ENCODE measurements at regions of chr19 and their contacts with region 1.

Region 1: GRCh38 chr19:12847159-12848139 is 9.1 kb downstream of the MAST1 start:
- DNase-seq: peak; percentile 79 to 91 (median 83)
- ATAC-seq: peak; percentile 90 to 99 (median 96)
- H3K4me3 ChIP-seq: peak overlapping the region in 9 of 12 donors; percentile 7 to 39 (median 22)
- H3K27ac ChIP-seq: no peak overlapping the region
- H3K4me1 ChIP-seq: peaks cover 0 to 10% (median 6%) of the 10 kb centered on the region in 12 donors
- H3K27me3 ChIP-seq: peaks cover 0 to 34% (median 19%) of the 10 kb centered on the region in 9 donors
- CTCF ChIP-seq: peak; percentile 98 to 100 (median 99)
- POLR2A ChIP-seq: peak in 1 of 2 donors; percentile 7

Region 2: DNA sequence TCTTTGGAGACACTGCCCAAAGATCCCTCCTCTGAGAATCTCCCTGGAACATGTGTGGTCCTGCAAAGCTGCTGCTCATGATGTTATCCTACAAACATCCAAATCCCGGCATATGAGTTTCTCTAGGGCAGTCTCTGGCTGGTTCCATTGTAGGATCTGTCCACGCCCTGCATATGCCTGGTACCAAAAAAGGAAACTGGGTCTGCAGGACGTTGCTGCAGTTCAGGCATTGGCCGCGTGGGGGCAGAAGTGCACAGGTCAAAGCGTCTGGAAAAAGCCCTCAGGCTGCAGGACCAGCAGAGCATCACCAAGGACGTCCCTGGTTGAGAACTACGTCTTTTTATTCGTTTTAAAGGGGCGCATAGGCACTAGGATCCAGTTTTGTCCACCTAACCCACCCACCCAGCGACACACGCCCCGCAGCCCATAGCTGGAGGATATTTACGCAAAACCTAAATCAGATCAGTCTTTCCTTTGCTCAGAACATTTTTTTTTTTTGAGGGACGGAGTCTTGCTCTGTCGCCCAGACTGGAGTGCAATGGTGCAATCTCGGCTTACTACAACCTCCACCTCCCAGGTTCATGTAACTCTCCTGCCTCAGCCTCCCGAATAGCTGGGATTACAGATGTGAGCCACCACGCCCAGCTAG is 283.3 kb before region 1 on chr19:
- intact Hi-C with region 1: loop called in 1 of 10 experiments (anchors 10 kb)
- DNase-seq: peak; percentile 82 to 92 (median 88)
- ATAC-seq: peak; percentile 68 to 95 (median 93)
- H3K4me3 ChIP-seq: no peak overlapping the region
- H3K27ac ChIP-seq: peak overlapping the region in 1 of 12 donors; percentile 38
- H3K4me1 ChIP-seq: peaks cover 0 to 7% (median 0%) of the 10 kb centered on the region in 12 donors
- H3K27me3 ChIP-seq: no peaks in the 10 kb centered on the region
- CTCF ChIP-seq: peak; percentile 90 to 98 (median 96)
- POLR2A ChIP-seq: no peak

Region 3: GRCh38 chr19:12666265-12667048 is 181.0 kb before region 1 on chr19 and contains the starts of genes MAN2B1 and WDR83:
- intact Hi-C with region 1: loop called in 1 of 10 experiments (anchors 10 kb)
- DNase-seq: peak; percentile 77 to 88 (median 82)
- ATAC-seq: peak; percentile 60 to 89 (median 88)
- H3K4me3 ChIP-seq: peak within 1 kb of the TSS; percentile 55 to 97 (median 88)
- H3K27ac ChIP-seq: peak within 1 kb of the TSS in 11 of 12 donors; percentile 45 to 90 (median 77)
- H3K4me1 ChIP-seq: peaks cover 9 to 51% (median 38%) of the 10 kb centered on the region in 12 donors
- H3K27me3 ChIP-seq: no peaks in the 10 kb centered on the region
- CTCF ChIP-seq: no peak
- POLR2A ChIP-seq: peak in 1 of 2 donors; percentile 45
- total RNA-seq, gene MAN2B1: 16.0 to 135 (median 30.7) TPM
- total RNA-seq, gene WDR83: 6.0 to 9.2 (median 7.8) TPM

Region 4: GRCh38 chr19:12681074-12681951 is 166.1 kb before region 1 on chr19 and contains the start of gene DHPS:
- intact Hi-C with region 1: loop called in 4 of 10 experiments (anchors 5 to 10 kb)
- DNase-seq: peak; percentile 90 to 96 (median 95)
- ATAC-seq: peak; percentile 89 to 95 (median 90)
- H3K4me3 ChIP-seq: peak within 1 kb of the TSS; percentile 55 to 99 (median 90)
- H3K27ac ChIP-seq: peak within 1 kb of the TSS; percentile 80 to 100 (median 95)
- H3K4me1 ChIP-seq: peaks cover 0 to 21% (median 8%) of the 10 kb centered on the region in 12 donors
- H3K27me3 ChIP-seq: no peaks in the 10 kb centered on the region
- CTCF ChIP-seq: peak in 1 of 12 donors; percentile 20
- POLR2A ChIP-seq: peak in 1 of 2 donors; percentile 27
- total RNA-seq, gene DHPS: 47.6 to 121 (median 54.6) TPM

Region 5: DNA sequence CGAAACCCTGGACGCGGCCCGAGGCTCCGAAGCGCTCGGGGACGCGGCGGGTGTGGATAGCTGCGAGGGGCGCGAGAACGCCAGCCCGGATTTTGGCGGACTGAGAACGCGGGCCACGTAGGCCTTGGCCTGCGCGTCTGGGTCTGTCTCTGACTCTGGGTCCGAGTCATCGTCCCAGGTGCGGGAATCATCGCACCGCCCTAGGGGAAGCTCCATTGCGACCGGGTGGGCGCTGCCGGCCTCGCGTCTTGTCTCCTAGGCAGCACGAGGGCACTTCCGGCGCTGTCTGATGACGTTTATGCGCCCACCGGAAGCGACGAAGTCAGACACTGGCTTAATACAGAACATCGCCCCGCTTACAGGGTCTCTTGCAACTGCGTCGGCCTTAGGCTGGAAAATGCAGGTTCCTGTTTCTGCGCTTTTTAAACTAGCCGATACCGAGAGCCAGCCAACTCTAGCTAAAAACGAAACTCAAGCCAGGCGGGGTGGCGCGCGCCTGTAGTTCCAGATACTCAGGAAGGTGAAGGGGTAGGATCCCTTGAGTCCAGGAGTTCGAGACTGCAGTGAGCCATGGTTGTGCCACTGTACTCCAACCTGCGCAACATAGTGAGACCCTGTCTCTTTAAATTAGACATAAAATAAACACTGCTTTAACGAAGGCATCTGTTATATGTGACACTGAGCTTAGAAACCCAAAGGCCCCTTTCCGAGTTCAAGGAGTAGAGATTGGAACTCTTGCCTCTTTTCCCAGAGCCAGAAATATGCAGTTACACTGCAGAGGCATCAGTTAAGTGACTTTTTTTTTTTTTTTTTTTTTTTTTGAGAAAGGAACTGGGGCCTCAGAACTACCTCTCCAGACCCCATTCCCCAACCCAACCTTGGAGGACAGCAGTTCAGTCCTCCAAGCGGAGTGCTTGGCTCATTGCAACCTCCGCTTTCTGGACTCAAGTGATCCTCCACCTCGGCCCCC is 150.8 kb before region 1 on chr19 and contains the start of gene FBXW9:
- intact Hi-C with region 1: no loop called
- DNase-seq: peak; percentile 95 to 97 (median 96)
- ATAC-seq: peak; percentile 91 to 95 (median 93)
- H3K4me3 ChIP-seq: peak within 1 kb of the TSS; percentile 57 to 98 (median 88)
- H3K27ac ChIP-seq: peak within 1 kb of the TSS; percentile 41 to 91 (median 84)
- H3K4me1 ChIP-seq: peaks cover 0 to 22% (median 13%) of the 10 kb centered on the region in 12 donors
- H3K27me3 ChIP-seq: no peaks in the 10 kb centered on the region
- CTCF ChIP-seq: no peak
- POLR2A ChIP-seq: peak in 1 of 2 donors; percentile 66
- total RNA-seq, gene FBXW9: 1.5 to 3.6 (median 2.4) TPM

Region 6: GRCh38 chr19:12716861-12717260 is 130.6 kb before region 1 on chr19:
- intact Hi-C with region 1: loop called in 2 of 10 experiments (anchors 5 kb)
- DNase-seq: no peak
- ATAC-seq: no peak
- H3K4me3 ChIP-seq: no peak overlapping the region
- H3K27ac ChIP-seq: no peak overlapping the region
- H3K4me1 ChIP-seq: peaks cover 4 to 27% (median 16%) of the 10 kb centered on the region in 12 donors
- H3K27me3 ChIP-seq: no peaks in the 10 kb centered on the region
- CTCF ChIP-seq: peak in 7 of 12 donors; percentile 8 to 33 (median 25)
- POLR2A ChIP-seq: no peak

Region 7: GRCh38 chr19:12757544-12758274 is 89.7 kb before region 1 on chr19:
- intact Hi-C with region 1: loop called in 5 of 10 experiments (anchors 1 to 5 kb)
- DNase-seq: peak; percentile 66 to 85 (median 76)
- ATAC-seq: peak; percentile 33 to 83 (median 76)
- H3K4me3 ChIP-seq: peak overlapping the region in 9 of 12 donors; percentile 16 to 53 (median 40)
- H3K27ac ChIP-seq: peak overlapping the region in 9 of 12 donors; percentile 3 to 72 (median 48)
- H3K4me1 ChIP-seq: peaks cover 0 to 24% (median 15%) of the 10 kb centered on the region in 12 donors
- H3K27me3 ChIP-seq: peaks cover 0 to 4% (median 0%) of the 10 kb centered on the region in 9 donors
- CTCF ChIP-seq: peak; percentile 78 to 98 (median 92)
- POLR2A ChIP-seq: no peak

Region 8: DNA sequence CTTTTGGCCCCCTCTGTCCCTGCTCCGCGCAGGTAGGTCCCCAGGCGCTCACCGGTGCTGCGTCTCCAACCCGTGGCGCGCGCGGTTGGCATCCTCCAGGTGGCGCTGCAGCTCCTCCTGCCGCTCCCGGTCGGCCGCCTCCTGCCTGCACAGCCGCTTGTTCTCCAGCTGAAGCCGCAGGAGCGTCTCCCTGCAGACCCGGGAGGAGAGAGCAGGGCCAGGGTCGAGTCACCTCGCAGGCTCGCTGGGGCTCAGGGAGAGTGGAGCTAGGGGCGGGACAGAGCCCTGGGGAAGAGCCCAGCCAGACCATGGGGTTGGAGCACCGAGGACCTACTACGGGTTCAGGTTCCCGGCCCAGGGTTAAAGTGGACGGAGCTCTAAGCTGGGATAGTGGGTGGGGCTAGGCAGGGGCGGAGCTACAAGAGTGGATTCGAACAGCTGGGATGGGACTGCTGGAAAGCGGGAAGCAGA is 81.4 kb before region 1 on chr19:
- intact Hi-C with region 1: loop called in 7 of 10 experiments (anchors 1 to 5 kb)
- DNase-seq: peak; percentile 77 to 93 (median 88)
- ATAC-seq: peak in 3 of 4 donors; percentile 66 to 85 (median 76)
- H3K4me3 ChIP-seq: peak overlapping the region in 9 of 12 donors; percentile 14 to 61 (median 48)
- H3K27ac ChIP-seq: peak overlapping the region in 11 of 12 donors; percentile 15 to 82 (median 61)
- H3K4me1 ChIP-seq: peaks cover 0 to 39% (median 9%) of the 10 kb centered on the region in 12 donors
- H3K27me3 ChIP-seq: no peaks in the 10 kb centered on the region
- CTCF ChIP-seq: peak in 10 of 12 donors; percentile 66 to 99 (median 84)
- POLR2A ChIP-seq: peak in 1 of 2 donors; percentile 35

Region 9: GRCh38 chr19:12782229-12783028 is 65.0 kb before region 1 on chr19:
- intact Hi-C with region 1: no loop called
- DNase-seq: peak; percentile 94 to 97 (median 95)
- ATAC-seq: peak; percentile 6 to 75 (median 56)
- H3K4me3 ChIP-seq: peak overlapping the region; percentile 5 to 67 (median 54)
- H3K27ac ChIP-seq: peak overlapping the region; percentile 92 to 100 (median 99)
- H3K4me1 ChIP-seq: peaks cover 7 to 84% (median 61%) of the 10 kb centered on the region in 12 donors
- H3K27me3 ChIP-seq: no peaks in the 10 kb centered on the region
- CTCF ChIP-seq: peak in 4 of 12 donors; percentile 14 to 35 (median 18)
- POLR2A ChIP-seq: peak in 1 of 2 donors; percentile 75

Region 10: GRCh38 chr19:12907166-12907565 is 59.7 kb after region 1 on chr19:
- intact Hi-C with region 1: no loop called
- DNase-seq: no peak
- ATAC-seq: peak in 1 of 4 donors; percentile 48
- H3K4me3 ChIP-seq: no peak overlapping the region
- H3K27ac ChIP-seq: no peak overlapping the region
- H3K4me1 ChIP-seq: peaks cover 0 to 1% (median under 1%) of the 10 kb centered on the region in 12 donors
- H3K27me3 ChIP-seq: no peaks in the 10 kb centered on the region
- CTCF ChIP-seq: no peak
- POLR2A ChIP-seq: no peak

Region 11: GRCh38 chr19:12965017-12965811 is 117.8 kb after region 1 on chr19:
- intact Hi-C with region 1: no loop called
- DNase-seq: peak; percentile 75 to 91 (median 84)
- ATAC-seq: peak; percentile 68 to 91 (median 88)
- H3K4me3 ChIP-seq: peak overlapping the region in 11 of 12 donors; percentile 30 to 66 (median 56)
- H3K27ac ChIP-seq: peak overlapping the region in 10 of 12 donors; percentile 6 to 73 (median 55)
- H3K4me1 ChIP-seq: peaks cover 0 to 14% (median 5%) of the 10 kb centered on the region in 12 donors
- H3K27me3 ChIP-seq: no peaks in the 10 kb centered on the region
- CTCF ChIP-seq: peak; percentile 76 to 96 (median 89)
- POLR2A ChIP-seq: peak in 1 of 2 donors; percentile 41